Esophagus muscularis mucosa (tissue), 4 donors: ENCODE measurements at regions of chr9 and their contacts with region 1.

Region 1: DNA sequence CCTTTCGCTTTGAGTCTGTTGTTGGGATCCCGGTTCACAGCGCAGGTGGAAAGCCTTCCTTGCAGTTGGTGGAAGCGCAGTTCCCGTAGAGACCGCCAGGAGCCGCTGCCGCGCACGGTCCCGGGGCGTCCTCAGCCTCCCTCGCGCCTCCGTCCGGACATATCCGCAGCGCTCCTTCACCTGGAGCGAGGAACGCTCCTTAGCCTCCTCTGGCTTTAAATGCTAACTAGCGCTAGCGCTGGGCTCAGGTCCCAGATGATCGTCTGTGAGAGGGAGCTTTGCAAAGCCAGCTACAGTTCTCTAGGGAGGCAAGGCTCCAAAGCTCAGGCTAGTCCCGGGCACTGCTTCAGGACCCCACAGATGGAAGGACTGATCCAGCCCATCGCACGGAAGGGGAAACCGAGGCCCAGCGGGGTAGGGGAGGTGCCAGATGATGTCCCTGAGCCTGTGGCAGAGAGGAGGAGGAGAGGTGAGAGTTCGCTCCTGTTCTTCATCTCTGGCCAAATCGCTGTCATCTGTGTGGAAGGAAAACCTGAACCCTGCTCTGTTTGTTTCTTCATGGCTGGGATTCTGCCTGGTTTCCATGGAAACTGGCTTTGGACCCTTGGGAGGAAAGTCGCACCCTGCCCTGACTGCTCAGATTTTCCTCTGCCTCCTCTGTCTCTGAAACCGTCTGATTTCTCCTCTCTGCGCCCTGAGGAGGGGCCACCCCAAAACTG is 31.4 kb downstream of the COL15A1 start:
- DNase-seq: peak; percentile 96
- H3K4me3 ChIP-seq: peak overlapping the region; percentile 41 to 52 (median 41)
- H3K27ac ChIP-seq: peak overlapping the region; percentile 84 to 89 (median 87)
- H3K4me1 ChIP-seq: peaks cover 73 to 98% (median 92%) of the 10 kb centered on the region in 4 donors
- H3K27me3 ChIP-seq: no peaks in the 10 kb centered on the region
- CTCF ChIP-seq: peak in 2 of 3 experiments; percentile 98 to 99
- EP300 ChIP-seq: no peak
- POLR2A ChIP-seq: no peak

Region 2: GRCh38 chr9:98944057-98944733 is 31.0 kb before region 1 on chr9:
- intact Hi-C with region 1: loop called (anchors 5 kb)
- DNase-seq: no peak
- H3K4me3 ChIP-seq: peak overlapping the region; percentile 66 to 78 (median 69)
- H3K27ac ChIP-seq: peak overlapping the region; percentile 87 to 92 (median 90)
- H3K4me1 ChIP-seq: peaks cover 29 to 81% (median 64%) of the 10 kb centered on the region in 4 donors
- H3K27me3 ChIP-seq: peaks cover 0 to 4% (median 0%) of the 10 kb centered on the region in 4 donors
- CTCF ChIP-seq: no peak
- EP300 ChIP-seq: no peak
- POLR2A ChIP-seq: no peak

Region 3: DNA sequence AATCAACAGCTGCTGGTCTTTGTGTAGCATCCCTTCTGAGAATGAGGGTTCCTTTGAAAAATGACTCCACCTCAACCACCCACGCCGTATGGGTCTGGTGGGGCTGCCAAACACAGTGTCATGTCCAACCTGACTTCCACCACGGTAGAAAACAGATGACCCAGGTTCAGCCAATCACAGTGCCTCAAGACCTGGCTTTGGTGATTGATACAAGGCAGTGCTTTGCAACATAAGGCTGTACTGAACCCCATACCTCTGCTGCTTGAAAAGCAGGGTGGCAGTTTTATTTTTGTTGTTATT is 118.3 kb after region 1 on chr9:
- intact Hi-C with region 1: no loop called
- DNase-seq: peak; percentile 62
- H3K4me3 ChIP-seq: no peak overlapping the region
- H3K27ac ChIP-seq: no peak overlapping the region
- H3K4me1 ChIP-seq: no peaks in the 10 kb centered on the region
- H3K27me3 ChIP-seq: no peaks in the 10 kb centered on the region
- CTCF ChIP-seq: no peak
- EP300 ChIP-seq: no peak
- POLR2A ChIP-seq: no peak